ENCODE measurements at regions of chr1 and their contacts with region 1.

Region 1: DNA sequence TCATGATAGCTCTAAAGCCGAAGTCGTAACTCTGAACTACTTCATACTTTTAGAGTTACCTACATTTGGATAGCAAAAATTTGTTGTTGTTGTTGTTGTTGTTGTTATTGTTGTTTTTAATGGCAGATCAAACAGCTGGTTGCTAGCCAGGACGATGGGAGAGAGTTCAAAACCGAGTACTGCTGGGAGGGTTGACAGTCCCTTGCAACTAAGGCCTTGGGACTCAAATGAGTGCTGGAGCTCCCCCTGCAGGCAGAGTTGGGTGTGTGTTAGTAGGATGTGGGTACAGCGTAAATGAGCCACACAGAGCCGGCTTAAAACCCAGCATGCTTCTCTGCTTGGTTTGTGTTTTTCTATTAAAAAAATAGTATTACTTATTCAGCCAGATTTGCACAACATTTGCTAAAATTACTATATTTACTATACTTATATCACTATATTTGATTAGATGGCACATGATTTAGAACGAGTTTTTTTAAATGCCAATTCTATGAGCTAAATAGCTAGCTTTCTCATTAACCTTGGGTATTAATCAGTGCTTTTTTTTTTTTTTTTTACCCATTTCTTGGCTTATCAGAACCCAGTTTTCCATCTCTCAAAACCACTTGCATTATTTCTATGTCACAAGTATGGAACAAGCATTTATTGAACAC is 129.2 kb upstream of the SYT6 start:
- DNase-seq: peak; percentile 93
- ATAC-seq: peak; percentile 99

Region 2: GRCh38 chr1:113978863-113979702 is 303.8 kb before region 1 on chr1 and contains the start of gene OLFML3:
- intact Hi-C with region 1: loop called (anchors 2 kb)
- DNase-seq: peak; percentile 83
- ATAC-seq: peak; percentile 70
- total RNA-seq, gene OLFML3: 10.8 TPM

Measured in left ventricle myocardium superior (tissue), 1 donor.